Naive thymus-derived CD4-positive, alpha-beta T cell (primary cell): ENCODE measurements at regions of chr19 and their contacts with region 1.

Region 1: GRCh38 chr19:10717356-10718204 is at the start of gene DNM2:
- DNase-seq: peak; percentile 90 to 100 (median 99)
- ATAC-seq: peak; percentile 90
- H3K4me3 ChIP-seq: peak within 1 kb of the TSS; percentile 77
- H3K4me3 Mint-ChIP-seq: peak within 1 kb of the TSS; percentile 91 to 98 (median 96)
- H3K27ac ChIP-seq: peak within 1 kb of the TSS; percentile 87
- H3K27ac Mint-ChIP-seq: peak within 1 kb of the TSS; percentile 85 to 96 (median 93)
- H3K4me1 ChIP-seq: peaks cover 23 to 34% of the 10 kb centered on the region in 2 donors
- H3K4me1 Mint-ChIP-seq: peaks cover 19 to 48% (median 35%) of the 10 kb centered on the region in 7 donors
- H3K27me3 ChIP-seq: no peaks in the 10 kb centered on the region
- H3K27me3 Mint-ChIP-seq: no peaks in the 10 kb centered on the region
- total RNA-seq, gene DNM2: 238 to 340 (median 269) TPM

Region 2: DNA sequence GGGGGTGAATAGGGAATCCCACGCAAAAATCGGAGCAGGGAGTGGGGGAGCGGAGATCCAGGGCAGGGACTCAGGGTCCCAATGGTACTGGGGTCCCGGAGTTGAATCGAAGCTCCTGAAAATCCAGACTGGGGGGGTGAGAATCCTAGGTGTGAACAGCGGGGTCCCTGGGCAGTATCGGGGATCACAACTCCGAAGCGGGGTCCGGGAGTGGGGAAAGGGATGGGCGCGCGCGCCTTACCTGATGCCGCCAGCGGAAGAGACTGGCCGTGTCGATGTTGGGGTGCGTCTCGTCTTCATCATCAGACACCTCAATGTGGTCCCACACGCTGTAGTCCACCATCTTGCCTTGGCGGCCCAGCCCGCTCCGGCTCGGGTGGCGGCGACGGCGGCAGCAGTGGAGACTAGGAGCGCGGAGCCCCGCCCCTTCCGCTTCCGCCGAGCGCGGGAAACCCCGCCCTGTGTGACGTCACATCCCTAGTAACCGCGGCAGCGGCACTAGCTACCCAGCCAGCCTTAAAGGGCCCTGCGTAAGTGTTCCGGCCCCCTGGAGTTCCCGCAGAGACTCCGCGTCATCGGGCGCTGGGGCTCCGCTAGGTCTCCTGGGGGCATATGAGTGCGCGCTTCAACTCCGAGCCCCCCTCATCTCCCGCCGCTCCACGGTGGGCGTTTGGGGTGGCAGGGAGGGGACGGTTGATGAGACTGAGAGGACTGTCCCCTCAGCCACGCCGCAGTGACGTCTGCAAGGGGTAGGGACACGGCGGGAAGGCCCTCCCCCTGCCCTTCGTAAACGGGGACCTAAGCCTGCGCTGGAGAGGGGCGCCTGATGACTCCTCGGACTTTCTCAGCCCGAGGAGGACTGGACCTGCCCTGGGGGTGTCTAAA is 314.2 kb before region 1 on chr19 and contains the start of gene CDC37:
- CTCF ChIA-PET with region 1: no interaction called
- POLR2A ChIA-PET with region 1: no interaction called
- intact Hi-C with region 1: loop called in 1 of 2 experiments (anchors 1 kb)
- DNase-seq: peak; percentile 95 to 99 (median 97)
- ATAC-seq: peak; percentile 88
- H3K4me3 ChIP-seq: peak within 1 kb of the TSS; percentile 87
- H3K4me3 Mint-ChIP-seq: peak within 1 kb of the TSS; percentile 90 to 97 (median 95)
- H3K27ac ChIP-seq: peak within 1 kb of the TSS; percentile 97
- H3K27ac Mint-ChIP-seq: peak within 1 kb of the TSS; percentile 80 to 97 (median 95)
- H3K4me1 ChIP-seq: peaks cover 55 to 59% of the 10 kb centered on the region in 2 donors
- H3K4me1 Mint-ChIP-seq: peaks cover 40 to 85% (median 59%) of the 10 kb centered on the region in 7 donors
- H3K27me3 ChIP-seq: no peaks in the 10 kb centered on the region
- H3K27me3 Mint-ChIP-seq: peaks cover 0 to 3% (median 0%) of the 10 kb centered on the region in 5 donors
- total RNA-seq, gene CDC37: 169 to 229 (median 180) TPM

Region 3: GRCh38 chr19:10677751-10678150 is 39.8 kb before region 1 on chr19:
- CTCF ChIA-PET with region 1: no interaction called
- POLR2A ChIA-PET with region 1: no interaction called
- intact Hi-C with region 1: no loop called
- DNase-seq: no peak
- ATAC-seq: no peak
- H3K4me3 ChIP-seq: no peak overlapping the region
- H3K4me3 Mint-ChIP-seq: no peak overlapping the region
- H3K27ac ChIP-seq: no peak overlapping the region
- H3K27ac Mint-ChIP-seq: peak overlapping the region in 1 of 9 donors; percentile 70
- H3K4me1 ChIP-seq: no peaks in the 10 kb centered on the region
- H3K4me1 Mint-ChIP-seq: peaks cover 0 to 4% (median 0%) of the 10 kb centered on the region in 7 donors
- H3K27me3 ChIP-seq: no peaks in the 10 kb centered on the region
- H3K27me3 Mint-ChIP-seq: no peaks in the 10 kb centered on the region

Region 4: GRCh38 chr19:10701955-10702525 is 15.5 kb before region 1 on chr19:
- CTCF ChIA-PET with region 1: interaction called, 5 read pairs
- POLR2A ChIA-PET with region 1: interaction called, 14 read pairs
- intact Hi-C with region 1: loop called (anchors 1 to 2 kb)
- DNase-seq: peak in 2 of 9 donors; percentile 13 to 31
- ATAC-seq: peak; percentile 14
- H3K4me3 ChIP-seq: peak overlapping the region; percentile 94
- H3K4me3 Mint-ChIP-seq: peak overlapping the region; percentile 90 to 98 (median 95)
- H3K27ac ChIP-seq: peak overlapping the region; percentile 77
- H3K27ac Mint-ChIP-seq: peak overlapping the region in 8 of 9 donors; percentile 63 to 93 (median 78)
- H3K4me1 ChIP-seq: peaks cover 0 to 3% of the 10 kb centered on the region in 2 donors
- H3K4me1 Mint-ChIP-seq: peaks cover 6 to 18% (median 12%) of the 10 kb centered on the region in 7 donors
- H3K27me3 ChIP-seq: no peaks in the 10 kb centered on the region
- H3K27me3 Mint-ChIP-seq: peaks cover 0 to 4% (median 0%) of the 10 kb centered on the region in 5 donors

Region 5: DNA sequence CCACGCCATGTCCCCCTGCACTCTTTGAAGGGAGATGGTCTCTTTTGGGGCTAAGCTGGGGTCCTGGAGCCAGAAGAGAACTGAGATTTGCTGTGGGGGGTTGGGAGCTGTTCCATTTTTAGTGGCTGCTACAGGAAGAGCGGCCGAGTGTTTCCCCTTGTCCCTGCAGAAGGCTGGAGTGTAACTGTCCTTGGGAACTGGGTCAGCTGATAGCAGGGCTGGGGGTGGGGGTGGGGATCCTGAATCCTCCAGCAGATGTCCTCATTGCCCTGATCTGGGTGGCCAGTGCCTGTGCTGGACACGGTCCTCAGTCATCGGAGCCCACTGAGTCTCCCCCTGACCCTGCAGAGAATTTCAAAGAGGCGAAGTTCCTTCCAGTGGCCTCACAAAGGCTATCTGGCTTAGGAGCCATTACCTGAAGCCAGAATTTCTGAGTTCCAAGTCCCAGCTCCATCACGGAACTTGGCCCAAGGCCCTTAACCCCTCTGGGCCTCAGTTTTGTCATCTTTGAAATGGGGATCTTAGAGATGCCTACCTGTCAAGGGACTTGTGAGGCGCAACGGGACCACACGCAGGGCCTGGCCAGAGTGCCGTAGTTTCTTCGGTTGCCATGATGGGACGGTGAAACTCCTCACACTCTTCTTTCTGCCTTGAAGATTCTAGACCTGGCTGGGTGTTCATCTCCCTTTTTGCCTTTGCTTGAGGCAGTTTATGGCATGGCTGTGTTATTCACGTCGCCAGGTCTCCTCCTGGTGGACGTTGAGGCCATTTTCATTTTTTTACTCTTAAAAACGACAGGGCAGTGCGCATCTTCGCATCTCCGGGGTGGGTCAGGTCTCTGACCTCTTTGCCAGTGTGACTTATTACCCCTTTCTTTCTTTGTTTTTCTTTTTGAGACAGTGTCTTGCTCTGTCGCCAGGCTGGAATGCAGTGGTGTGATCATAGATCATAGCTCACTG is 52.2 kb after region 1 on chr19:
- CTCF ChIA-PET with region 1: interaction called, 22 read pairs
- POLR2A ChIA-PET with region 1: interaction called, 12 read pairs
- intact Hi-C with region 1: loop called (anchors 1 kb)
- DNase-seq: peak in 6 of 9 donors; percentile 21 to 49 (median 38)
- ATAC-seq: no peak
- H3K4me3 ChIP-seq: no peak overlapping the region
- H3K4me3 Mint-ChIP-seq: no peak overlapping the region
- H3K27ac ChIP-seq: peak overlapping the region; percentile 29
- H3K27ac Mint-ChIP-seq: peak overlapping the region in 8 of 9 donors; percentile 20 to 79 (median 68)
- H3K4me1 ChIP-seq: peaks cover 0 to 4% of the 10 kb centered on the region in 2 donors
- H3K4me1 Mint-ChIP-seq: peaks cover 14 to 42% (median 32%) of the 10 kb centered on the region in 7 donors
- H3K27me3 ChIP-seq: no peaks in the 10 kb centered on the region
- H3K27me3 Mint-ChIP-seq: no peaks in the 10 kb centered on the region

Region 6: DNA sequence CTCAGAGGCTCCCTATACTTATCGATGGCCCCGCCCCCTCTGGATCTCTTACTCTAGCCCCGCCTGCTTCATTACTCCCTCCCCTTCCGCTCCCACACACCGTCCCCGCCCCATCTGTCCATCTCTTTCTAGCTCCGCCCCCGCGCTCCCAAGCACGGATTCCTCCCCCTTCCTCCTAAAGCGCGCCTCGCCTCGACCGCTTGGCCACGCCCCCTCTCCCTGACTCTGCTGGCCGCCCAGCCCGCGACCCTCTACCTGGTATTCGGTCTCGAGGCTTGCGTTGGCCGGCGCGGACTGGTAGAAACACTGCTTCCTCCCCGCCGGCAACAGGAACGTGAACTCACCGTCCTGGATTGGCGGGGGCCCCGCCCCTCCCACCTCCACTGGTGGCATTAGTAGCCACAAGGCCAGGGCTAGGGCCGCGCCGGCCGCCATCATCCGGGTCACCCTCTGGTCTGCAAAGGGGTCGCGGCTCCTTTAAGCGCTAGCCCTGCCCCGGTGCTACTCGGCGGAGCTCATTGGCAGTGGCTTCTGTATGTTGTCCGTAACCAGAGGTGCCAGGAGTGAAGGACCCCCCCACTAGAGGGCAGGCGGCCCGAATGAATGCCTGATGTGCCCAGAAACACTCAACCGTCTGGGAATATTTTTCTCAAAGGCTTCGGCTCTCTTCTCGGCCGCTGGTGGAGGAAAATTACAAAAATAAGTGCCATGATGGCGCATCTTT is 118.3 kb after region 1 on chr19 and contains the start of gene TMED1:
- CTCF ChIA-PET with region 1: interaction called, 4 read pairs
- POLR2A ChIA-PET with region 1: interaction called, 21 read pairs
- intact Hi-C with region 1: loop called (anchors 1 kb)
- DNase-seq: peak; percentile 81 to 97 (median 93)
- ATAC-seq: peak; percentile 92
- H3K4me3 ChIP-seq: peak within 1 kb of the TSS; percentile 98
- H3K4me3 Mint-ChIP-seq: peak within 1 kb of the TSS; percentile 82 to 99 (median 96)
- H3K27ac ChIP-seq: peak within 1 kb of the TSS; percentile 93
- H3K27ac Mint-ChIP-seq: peak within 1 kb of the TSS; percentile 98 to 100 (median 99)
- H3K4me1 ChIP-seq: peaks cover 8 to 13% of the 10 kb centered on the region in 2 donors
- H3K4me1 Mint-ChIP-seq: peaks cover 12 to 20% (median 15%) of the 10 kb centered on the region in 7 donors
- H3K27me3 ChIP-seq: no peaks in the 10 kb centered on the region
- H3K27me3 Mint-ChIP-seq: no peaks in the 10 kb centered on the region
- total RNA-seq, gene TMED1: 7.6 to 12.8 (median 9.9) TPM

Region 7: DNA sequence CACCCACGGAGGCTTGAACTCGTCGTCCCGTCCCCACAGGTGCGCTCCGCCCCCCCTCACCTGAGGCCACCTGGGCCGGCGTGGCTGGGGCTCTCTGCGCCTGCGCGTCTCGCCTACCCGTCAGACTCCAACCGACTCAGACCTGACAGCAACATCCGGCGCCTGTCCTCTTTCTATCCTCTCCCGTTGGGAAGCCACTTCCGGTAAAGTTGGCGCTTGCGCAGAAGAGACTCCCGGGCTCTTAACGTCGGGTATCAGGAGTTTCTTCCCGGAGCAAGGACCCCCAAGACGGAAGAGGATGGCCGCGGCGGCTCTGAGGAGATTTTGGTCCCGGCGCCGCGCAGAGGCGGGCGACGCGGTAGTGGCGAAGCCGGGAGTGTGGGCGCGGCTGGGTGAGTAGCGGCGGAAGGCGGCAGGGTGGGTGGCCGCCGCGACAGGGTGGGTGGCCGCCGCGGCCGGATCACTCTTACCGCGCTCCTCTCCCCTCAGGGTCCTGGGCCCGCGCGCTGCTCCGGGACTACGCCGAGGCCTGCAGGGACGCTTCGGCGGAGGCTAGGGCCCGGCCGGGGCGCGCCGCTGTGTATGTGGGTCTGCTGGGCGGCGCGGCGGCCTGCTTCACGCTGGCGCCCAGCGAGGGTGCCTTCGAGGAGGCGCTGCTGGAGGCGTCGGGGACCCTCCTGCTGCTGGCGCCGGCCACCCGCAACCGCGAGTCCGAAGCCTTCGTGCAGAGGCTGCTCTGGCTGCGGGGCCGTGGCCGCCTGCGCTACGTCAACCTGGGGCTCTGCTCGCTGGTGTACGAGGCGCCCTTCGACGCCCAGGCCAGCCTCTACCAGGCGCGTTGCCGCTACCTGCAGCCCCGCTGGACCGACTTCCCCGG is 211.2 kb after region 1 on chr19 and contains the starts of genes TIMM29 and YIPF2:
- CTCF ChIA-PET with region 1: no interaction called
- POLR2A ChIA-PET with region 1: interaction called, 3 read pairs
- intact Hi-C with region 1: loop called in 1 of 2 experiments (anchors 1 kb)
- DNase-seq: peak; percentile 76 to 92 (median 88)
- ATAC-seq: peak; percentile 91
- H3K4me3 ChIP-seq: peak within 1 kb of the TSS; percentile 89
- H3K4me3 Mint-ChIP-seq: peak within 1 kb of the TSS; percentile 84 to 96 (median 92)
- H3K27ac ChIP-seq: peak within 1 kb of the TSS; percentile 77
- H3K27ac Mint-ChIP-seq: peak within 1 kb of the TSS; percentile 66 to 93 (median 90)
- H3K4me1 ChIP-seq: peaks cover 14 to 16% of the 10 kb centered on the region in 2 donors
- H3K4me1 Mint-ChIP-seq: peaks cover 12 to 33% (median 26%) of the 10 kb centered on the region in 7 donors
- H3K27me3 ChIP-seq: no peaks in the 10 kb centered on the region
- H3K27me3 Mint-ChIP-seq: no peaks in the 10 kb centered on the region
- total RNA-seq, gene TIMM29: 15.8 to 33.4 (median 24.7) TPM
- total RNA-seq, gene YIPF2: 20.5 to 27.9 (median 26.2) TPM

Region 8: GRCh38 chr19:11050323-11051114 is 332.9 kb after region 1 on chr19:
- CTCF ChIA-PET with region 1: no interaction called
- POLR2A ChIA-PET with region 1: no interaction called
- intact Hi-C with region 1: no loop called
- DNase-seq: no peak
- ATAC-seq: no peak
- H3K4me3 ChIP-seq: no peak overlapping the region
- H3K4me3 Mint-ChIP-seq: peak overlapping the region in 5 of 10 donors; percentile 49 to 85 (median 64)
- H3K27ac ChIP-seq: peak overlapping the region; percentile 68
- H3K27ac Mint-ChIP-seq: peak overlapping the region in 8 of 9 donors; percentile 88 to 98 (median 95)
- H3K4me1 ChIP-seq: peaks cover 33 to 47% of the 10 kb centered on the region in 2 donors
- H3K4me1 Mint-ChIP-seq: peaks cover 21 to 59% (median 51%) of the 10 kb centered on the region in 7 donors
- H3K27me3 ChIP-seq: no peaks in the 10 kb centered on the region
- H3K27me3 Mint-ChIP-seq: no peaks in the 10 kb centered on the region

Region 9: DNA sequence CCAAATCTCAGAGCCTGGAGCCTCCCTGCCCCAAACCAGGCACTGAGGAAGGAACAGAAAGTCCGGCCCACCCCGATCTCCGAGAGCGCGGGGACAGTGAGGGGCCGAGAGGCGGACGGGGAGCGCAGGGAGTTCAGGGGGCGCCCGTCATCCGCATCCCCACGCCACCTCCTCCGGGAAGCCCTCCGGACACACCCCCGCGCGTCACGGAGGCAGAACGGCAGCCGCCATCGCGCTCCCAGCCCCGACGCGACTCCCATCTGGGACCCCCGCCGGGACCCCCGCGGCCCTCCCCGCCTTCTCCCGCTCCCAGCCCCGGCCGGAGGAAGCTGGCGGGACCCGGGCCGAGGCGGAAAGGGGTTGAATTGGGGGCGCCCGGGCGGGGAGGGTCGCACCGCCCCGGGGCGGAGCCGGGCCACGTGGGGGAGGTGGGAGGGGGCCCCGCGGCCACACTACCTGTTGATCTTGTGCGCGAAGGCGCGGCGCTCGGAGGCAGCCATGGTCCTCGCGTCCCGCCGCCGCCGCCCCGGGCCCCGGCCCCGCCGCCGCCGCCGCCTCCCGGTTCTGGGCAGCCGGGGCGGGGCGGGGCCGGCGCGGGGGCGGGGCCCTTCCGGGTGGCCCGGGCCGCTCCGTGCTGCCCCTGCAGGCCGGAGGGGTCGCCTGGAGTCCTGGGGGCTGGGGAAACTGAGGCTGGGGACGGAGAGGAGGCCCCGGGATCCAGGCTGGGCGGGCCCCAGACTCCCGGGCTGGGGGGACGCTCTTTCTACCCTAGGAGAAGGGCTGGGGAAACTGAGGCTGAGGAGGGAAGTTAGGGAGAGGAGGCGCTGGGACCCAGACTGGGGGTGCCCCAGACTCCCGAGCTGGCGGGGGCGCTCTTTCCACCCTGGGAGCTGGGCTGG is 544.6 kb after region 1 on chr19 and contains the start of gene DOCK6:
- CTCF ChIA-PET with region 1: no interaction called
- POLR2A ChIA-PET with region 1: no interaction called
- intact Hi-C with region 1: no loop called
- DNase-seq: peak in 1 of 9 donors; percentile 46
- ATAC-seq: peak; percentile 64
- H3K4me3 ChIP-seq: no peak within 1 kb of the TSS
- H3K4me3 Mint-ChIP-seq: peak within 1 kb of the TSS; percentile 49 to 85 (median 72)
- H3K27ac ChIP-seq: no peak within 1 kb of the TSS
- H3K27ac Mint-ChIP-seq: no peak within 1 kb of the TSS
- H3K4me1 ChIP-seq: no peaks in the 10 kb centered on the region
- H3K4me1 Mint-ChIP-seq: peaks cover 0 to 7% (median 3%) of the 10 kb centered on the region in 7 donors
- H3K27me3 ChIP-seq: peaks cover 0 to 14% of the 10 kb centered on the region in 2 donors
- H3K27me3 Mint-ChIP-seq: peaks cover 33 to 71% (median 42%) of the 10 kb centered on the region in 5 donors
- total RNA-seq, gene DOCK6: 0.73 to 5.2 (median 1.5) TPM in 3 of 5 experiments, not detected in the others

Region 10: DNA sequence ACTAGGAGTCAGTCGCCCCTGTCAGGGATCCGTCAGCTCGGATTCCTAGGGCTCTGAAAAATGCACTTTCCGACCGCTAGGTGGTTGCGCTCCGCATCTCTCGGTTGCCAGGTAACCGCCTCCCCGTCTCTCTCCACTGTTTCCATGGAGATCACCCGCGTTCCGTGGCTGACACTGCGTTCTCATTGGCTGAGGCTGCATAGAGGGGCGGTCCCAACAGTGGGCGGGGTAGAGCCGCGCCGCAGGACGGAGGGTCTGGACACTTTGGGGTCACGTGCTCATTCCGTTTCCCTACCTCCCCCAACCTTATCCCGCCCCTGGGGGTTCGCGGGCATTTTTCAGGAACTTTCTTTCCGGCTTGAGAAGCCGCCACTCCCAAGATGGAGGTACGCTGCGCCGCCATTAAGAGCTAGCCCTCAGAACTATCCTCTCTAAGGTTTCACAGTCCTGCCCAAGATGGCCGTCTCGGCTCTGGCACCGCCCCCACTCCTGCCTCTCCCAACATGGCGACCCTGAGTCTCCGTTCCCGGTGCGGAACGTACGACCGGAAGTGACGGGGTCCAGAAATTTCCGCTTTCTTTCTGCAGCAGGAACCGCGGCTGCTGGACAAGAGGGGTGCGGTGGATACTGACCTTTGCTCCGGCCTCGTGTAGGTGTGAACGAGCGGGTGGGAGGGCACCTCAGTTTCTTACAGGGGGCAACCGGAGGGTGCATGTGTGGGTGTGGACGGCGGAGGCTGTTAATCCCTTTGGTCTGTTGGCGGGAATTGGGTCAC is 717.7 kb after region 1 on chr19 and contains the starts of genes ODAD3 and PRKCSH:
- CTCF ChIA-PET with region 1: no interaction called
- POLR2A ChIA-PET with region 1: no interaction called
- intact Hi-C with region 1: loop called in 1 of 2 experiments (anchors 1 kb)
- DNase-seq: peak; percentile 90 to 99 (median 97)
- ATAC-seq: peak; percentile 97
- H3K4me3 ChIP-seq: peak within 1 kb of the TSS; percentile 77
- H3K4me3 Mint-ChIP-seq: peak within 1 kb of the TSS; percentile 96 to 100 (median 99)
- H3K27ac ChIP-seq: peak within 1 kb of the TSS; percentile 77
- H3K27ac Mint-ChIP-seq: peak within 1 kb of the TSS; percentile 91 to 98 (median 97)
- H3K4me1 ChIP-seq: peaks cover 13 to 16% of the 10 kb centered on the region in 2 donors
- H3K4me1 Mint-ChIP-seq: peaks cover 10 to 34% (median 24%) of the 10 kb centered on the region in 7 donors
- H3K27me3 ChIP-seq: no peaks in the 10 kb centered on the region
- H3K27me3 Mint-ChIP-seq: peaks cover 0 to 8% (median 0%) of the 10 kb centered on the region in 5 donors
- total RNA-seq, gene ODAD3: not detected
- total RNA-seq, gene PRKCSH: 254 to 332 (median 288) TPM